ENCODE measurements at regions of chr2 and their contacts with region 1.

Region 1: DNA sequence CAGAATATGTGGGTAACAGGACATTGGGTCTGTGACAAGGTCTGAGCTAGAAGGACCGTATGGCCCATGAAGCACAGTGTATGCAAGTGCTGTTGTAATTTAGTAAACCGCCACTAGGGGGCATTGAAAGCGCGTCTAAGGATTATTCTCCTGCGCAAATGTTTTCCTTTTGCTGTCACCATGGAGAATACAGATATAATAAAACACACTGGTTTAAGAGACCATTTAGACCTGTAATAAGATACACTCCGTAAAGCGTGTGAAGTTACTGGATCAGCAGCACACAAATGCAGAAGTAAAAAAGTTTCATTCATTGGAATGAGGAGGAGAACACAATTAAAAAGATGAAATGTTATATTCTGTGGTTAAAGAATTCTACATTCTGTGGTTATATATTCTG is 272.4 kb downstream of the AGAP1 start:
- DNase-seq: peak in 5 of 10 donors; percentile 47 to 87 (median 60)

Region 2: DNA sequence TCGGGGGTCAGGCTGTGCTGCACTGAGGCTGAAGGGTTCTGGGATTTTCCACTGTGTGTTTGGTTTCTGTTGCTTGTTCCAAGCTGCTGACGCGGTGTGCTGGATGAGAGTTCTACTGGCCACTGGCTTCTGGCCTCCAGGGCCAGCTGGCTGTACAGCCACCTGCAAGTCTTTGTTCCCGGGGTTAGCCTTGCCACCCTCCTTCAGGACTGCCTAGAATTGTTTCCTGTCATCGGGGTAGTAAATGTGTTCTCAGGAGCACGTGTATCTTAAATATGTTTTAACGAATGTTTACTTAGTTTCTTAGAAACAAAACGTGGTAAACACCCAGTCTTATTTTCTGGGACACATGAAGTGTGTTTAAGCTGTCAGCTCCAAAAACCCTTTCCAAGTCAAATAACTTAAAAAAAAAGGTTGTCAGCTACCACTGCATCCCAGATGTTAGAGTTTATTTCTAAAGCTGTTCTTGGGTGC is 41.2 kb before region 1 on chr2:
- intact Hi-C with region 1: no loop called
- DNase-seq: peak in 4 of 10 donors; percentile 56 to 92 (median 65)

Region 3: GRCh38 chr2:236180831-236181453 is 414.7 kb after region 1 on chr2:
- intact Hi-C with region 1: loop called (anchors 2 kb)
- DNase-seq: peak in 3 of 10 donors; percentile 55 to 62 (median 61)

Measured in posterior cingulate gyrus (tissue), 11 donors.